HAP-1 (cell line): ENCODE measurements at regions of chr2 and their contacts with region 1.

Region 1: DNA sequence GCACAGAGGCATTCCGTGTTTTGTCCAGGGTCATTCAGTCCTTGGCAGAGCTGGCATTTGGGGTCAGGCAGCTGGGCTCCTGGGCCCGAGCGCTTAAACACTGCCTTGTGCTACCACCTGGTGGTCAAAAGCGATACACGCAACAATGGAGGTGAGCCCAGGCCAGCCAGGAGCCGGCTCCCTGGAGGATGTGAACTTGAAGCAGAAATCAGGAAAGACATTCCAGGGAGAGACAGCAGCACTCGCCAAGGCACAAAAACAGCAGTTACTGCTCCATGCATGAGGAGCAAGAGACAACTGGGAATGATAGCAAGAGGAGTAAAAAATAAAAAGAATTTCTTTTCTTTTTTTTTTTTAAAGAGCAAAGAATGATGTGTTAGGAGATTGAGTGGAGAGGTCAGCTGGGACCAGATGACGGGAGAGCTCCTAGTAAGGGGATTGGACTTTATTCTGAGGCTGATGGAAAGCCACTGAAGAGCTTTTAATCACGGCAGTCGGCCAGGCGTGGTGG is 20.7 kb downstream of the SCYGR8 start:
- DNase-seq: peak; percentile 72 to 88
- H3K4me3 ChIP-seq: no peak overlapping the region
- H3K4me1 ChIP-seq: no peaks in the 10 kb centered on the region
- H3K27me3 ChIP-seq: no peaks in the 10 kb centered on the region

Region 2: DNA sequence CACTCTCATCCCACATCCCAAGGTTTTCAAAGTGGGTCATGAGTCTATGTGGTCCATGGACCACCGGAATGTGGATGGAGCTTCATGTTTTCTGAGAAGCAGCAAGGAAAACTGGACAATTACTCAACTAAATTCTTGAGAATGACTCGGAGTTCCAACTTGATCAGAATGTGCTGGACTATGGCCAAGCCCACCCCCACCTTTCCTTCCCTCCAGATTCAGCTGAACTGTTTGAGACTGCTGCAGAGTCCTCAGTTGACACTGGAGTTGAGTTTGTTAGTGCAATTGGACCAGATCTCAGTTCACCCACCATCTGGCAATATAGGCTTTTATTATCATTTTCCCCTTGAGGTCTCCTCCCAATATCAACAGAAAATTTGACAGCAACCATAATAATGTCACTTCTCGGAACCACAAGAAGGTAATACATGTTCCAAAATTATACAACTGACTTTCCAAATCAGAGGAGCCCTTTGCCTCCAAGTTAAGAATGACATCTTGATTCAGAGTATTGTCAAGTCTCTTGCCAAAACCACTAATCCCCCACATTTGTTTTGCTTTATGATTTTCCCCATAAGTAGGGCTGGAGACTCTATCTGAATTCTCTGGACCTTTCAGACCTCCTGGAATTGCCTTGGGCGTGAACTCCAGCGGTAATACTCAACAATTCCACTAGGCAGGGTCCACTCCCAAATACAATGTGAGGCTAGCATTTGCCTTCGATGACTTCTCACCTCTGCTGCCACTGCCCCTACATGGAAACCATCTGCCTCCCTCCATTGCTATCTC is 611.2 kb before region 1 on chr2:
- in situ Hi-C with region 1: loop called (anchors 10 kb)
- DNase-seq: no peak
- H3K4me3 ChIP-seq: no peak overlapping the region
- H3K4me1 ChIP-seq: peaks cover 10% of the 10 kb centered on the region
- H3K27me3 ChIP-seq: no peaks in the 10 kb centered on the region

Region 3: GRCh38 chr2:227406177-227407031 is 360.0 kb before region 1 on chr2:
- in situ Hi-C with region 1: loop called (anchors 5 kb)
- DNase-seq: peak; percentile 81 to 99
- H3K4me3 ChIP-seq: no peak overlapping the region
- H3K4me1 ChIP-seq: peaks cover 11% of the 10 kb centered on the region
- H3K27me3 ChIP-seq: no peaks in the 10 kb centered on the region

Region 4: DNA sequence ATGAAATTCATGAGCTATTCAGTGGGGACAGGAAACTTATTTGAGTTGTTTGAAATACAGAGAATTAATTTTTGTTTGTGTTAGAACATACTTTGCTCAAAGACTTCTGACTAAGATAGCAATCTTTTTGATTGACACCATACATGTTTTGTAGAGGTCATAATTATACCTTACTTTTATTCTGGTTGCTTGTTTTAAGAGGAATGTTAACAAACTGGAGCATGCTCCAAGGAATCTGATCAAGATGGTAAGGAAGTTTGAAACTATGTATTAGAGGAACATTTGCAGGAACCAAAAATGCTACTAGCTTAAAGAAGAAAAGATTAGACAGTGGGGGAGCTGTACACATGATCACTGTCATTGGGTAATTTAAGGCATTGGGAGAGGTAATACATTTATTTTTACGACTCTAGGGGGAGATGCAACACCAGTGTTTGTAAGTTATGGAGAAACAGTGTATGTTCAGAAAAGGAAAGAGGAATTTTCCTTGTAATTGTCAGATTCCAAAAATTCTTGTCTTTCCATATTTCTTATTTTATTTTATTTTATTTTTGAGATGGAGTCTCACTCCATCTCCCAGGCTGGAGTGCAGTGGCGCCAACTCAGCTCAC is 286.5 kb before region 1 on chr2:
- in situ Hi-C with region 1: loop called (anchors 25 kb)
- DNase-seq: peak in 1 of 2 experiments; percentile 47
- H3K4me3 ChIP-seq: no peak overlapping the region
- H3K4me1 ChIP-seq: peaks cover 12% of the 10 kb centered on the region
- H3K27me3 ChIP-seq: no peaks in the 10 kb centered on the region

Region 5: GRCh38 chr2:227661019-227661649 is 105.3 kb before region 1 on chr2:
- in situ Hi-C with region 1: loop called (anchors 10 kb)
- DNase-seq: peak in 1 of 2 experiments; percentile 33
- H3K4me3 ChIP-seq: no peak overlapping the region
- H3K4me1 ChIP-seq: peaks cover 11% of the 10 kb centered on the region
- H3K27me3 ChIP-seq: no peaks in the 10 kb centered on the region